H1 (cell line): ENCODE measurements at regions of chr13 and their contacts with region 1.

Region 1: DNA sequence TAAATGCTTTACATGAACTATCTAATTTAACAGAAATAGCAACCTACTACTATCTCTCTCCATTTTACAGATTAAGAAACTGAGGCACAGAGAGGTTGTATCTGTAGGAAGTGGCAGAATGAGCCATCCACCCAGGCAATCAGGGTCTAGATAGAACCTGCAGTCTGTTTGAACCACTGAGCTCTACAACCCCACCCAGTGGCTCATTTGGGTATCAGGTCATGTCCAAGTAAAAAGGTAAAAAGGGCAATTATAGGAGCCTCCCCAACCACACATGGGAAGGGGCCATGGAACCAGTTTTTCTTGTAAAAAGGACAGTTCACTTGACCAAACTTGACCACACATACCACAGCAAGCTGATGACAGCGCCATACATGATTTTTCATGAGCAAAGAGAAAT is 92.9 kb upstream of the SGCG start:
- DNase-seq: peak in 1 of 2 experiments; percentile 69
- H3K4me3 ChIP-seq: no peak overlapping the region
- H3K27ac ChIP-seq: no peak overlapping the region
- H3K4me1 ChIP-seq: no peaks in the 10 kb centered on the region
- H3K27me3 ChIP-seq: no peaks in the 10 kb centered on the region; a peak in 1 of 7 replicates
- CTCF ChIP-seq: peak; percentile 10 to 71 (median 63)
- EP300 ChIP-seq: no peak
- POLR2A ChIP-seq: no peak
- RAD21 ChIP-seq: peak; percentile 61 to 71

Region 2: GRCh38 chr13:23065623-23066022 is 22.3 kb before region 1 on chr13:
- CTCF ChIA-PET with region 1: interaction called, 15 read pairs
- POLR2A ChIA-PET with region 1: no interaction called
- DNase-seq: no peak
- H3K4me3 ChIP-seq: no peak overlapping the region
- H3K27ac ChIP-seq: no peak overlapping the region
- H3K4me1 ChIP-seq: no peaks in the 10 kb centered on the region
- H3K27me3 ChIP-seq: no peaks in the 10 kb centered on the region
- CTCF ChIP-seq: no peak
- EP300 ChIP-seq: no peak
- POLR2A ChIP-seq: no peak
- RAD21 ChIP-seq: no peak

Region 3: GRCh38 chr13:23074075-23074828 is 13.6 kb before region 1 on chr13:
- CTCF ChIA-PET with region 1: interaction called, 13 read pairs
- POLR2A ChIA-PET with region 1: no interaction called
- DNase-seq: no peak
- H3K4me3 ChIP-seq: no peak overlapping the region
- H3K27ac ChIP-seq: no peak overlapping the region
- H3K4me1 ChIP-seq: no peaks in the 10 kb centered on the region
- H3K27me3 ChIP-seq: no peaks in the 10 kb centered on the region
- CTCF ChIP-seq: no peak
- EP300 ChIP-seq: no peak
- POLR2A ChIP-seq: no peak
- RAD21 ChIP-seq: no peak

Region 4: DNA sequence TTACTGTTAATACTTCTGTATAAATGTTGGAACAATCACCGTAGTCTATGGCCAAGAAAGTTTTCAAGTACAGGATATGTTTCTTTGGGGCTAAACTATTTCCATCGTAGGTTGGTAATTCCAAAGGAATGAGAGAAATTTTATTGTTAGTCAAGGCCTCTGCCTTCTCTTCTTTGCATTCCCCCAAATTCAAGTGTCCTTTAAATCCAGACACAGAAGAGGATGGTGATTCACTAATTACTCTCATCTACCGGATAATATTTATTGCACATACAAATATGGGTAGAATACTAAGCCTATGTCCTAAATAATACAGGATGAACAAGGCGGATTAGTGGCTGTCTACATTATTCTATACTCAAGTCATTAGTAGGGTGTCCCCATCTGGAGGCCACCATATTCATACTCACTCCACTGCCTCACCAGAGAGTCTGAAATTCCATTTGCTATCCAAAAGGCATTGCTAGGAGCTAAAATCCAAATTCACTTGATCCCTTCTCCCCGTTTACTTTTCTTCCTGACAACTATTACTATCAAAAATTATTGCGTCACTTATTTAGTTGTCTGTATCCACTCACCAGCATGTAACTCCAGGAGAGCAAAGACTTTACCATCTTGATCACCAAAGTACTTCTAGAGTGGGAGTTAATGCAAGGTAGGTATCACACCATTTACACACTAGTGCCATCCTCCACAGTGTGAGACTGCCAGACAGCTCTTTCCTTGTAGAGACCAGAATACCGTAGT is 10.5 kb after region 1 on chr13:
- CTCF ChIA-PET with region 1: interaction called, 25 read pairs
- POLR2A ChIA-PET with region 1: no interaction called
- DNase-seq: no peak
- H3K4me3 ChIP-seq: no peak overlapping the region
- H3K27ac ChIP-seq: no peak overlapping the region
- H3K4me1 ChIP-seq: no peaks in the 10 kb centered on the region
- H3K27me3 ChIP-seq: no peaks in the 10 kb centered on the region
- CTCF ChIP-seq: no peak
- EP300 ChIP-seq: no peak
- POLR2A ChIP-seq: no peak
- RAD21 ChIP-seq: no peak